Activated T-helper 2 cell treated with anti-CD3 and anti-CD28 coated beads, Interferon-gamma antibody, Interleukin-2, Interleukin-4, amounts not matched to agents 10 μg/mL and 5 μg/mL and 100 μg/mL, durations not matched to agents 14 hours and 24 hours and 36 hours (primary cell): ENCODE measurements at regions of chr11 and their contacts with region 1.

Region 1: GRCh38 chr11:112113539-112114457 is 27.1 kb downstream of the SDHD start:
- DNase-seq: no peak
- H3K4me3 Mint-ChIP-seq: no peak overlapping the region
- H3K27ac Mint-ChIP-seq: no peak overlapping the region
- H3K4me1 Mint-ChIP-seq: peaks cover 9% of the 10 kb centered on the region
- H3K27me3 Mint-ChIP-seq: no peaks in the 10 kb centered on the region

Region 2: GRCh38 chr11:111833524-111833923 is 280.3 kb before region 1 on chr11:
- intact Hi-C with region 1: no loop called
- DNase-seq: no peak
- H3K4me3 Mint-ChIP-seq: no peak overlapping the region
- H3K27ac Mint-ChIP-seq: no peak overlapping the region
- H3K4me1 Mint-ChIP-seq: peaks cover 16% of the 10 kb centered on the region
- H3K27me3 Mint-ChIP-seq: no peaks in the 10 kb centered on the region

Region 3: GRCh38 chr11:112074026-112074811 is 39.6 kb before region 1 on chr11 and contains the start of gene NKAPD1:
- intact Hi-C with region 1: no loop called
- DNase-seq: peak; percentile 75
- H3K4me3 Mint-ChIP-seq: peak within 1 kb of the TSS; percentile 94
- H3K27ac Mint-ChIP-seq: peak within 1 kb of the TSS; percentile 92
- H3K4me1 Mint-ChIP-seq: peaks cover 23% of the 10 kb centered on the region
- H3K27me3 Mint-ChIP-seq: peaks cover 8% of the 10 kb centered on the region
- total RNA-seq, gene NKAPD1: 24.6 and 25.0 TPM in 2 replicates

Region 4: DNA sequence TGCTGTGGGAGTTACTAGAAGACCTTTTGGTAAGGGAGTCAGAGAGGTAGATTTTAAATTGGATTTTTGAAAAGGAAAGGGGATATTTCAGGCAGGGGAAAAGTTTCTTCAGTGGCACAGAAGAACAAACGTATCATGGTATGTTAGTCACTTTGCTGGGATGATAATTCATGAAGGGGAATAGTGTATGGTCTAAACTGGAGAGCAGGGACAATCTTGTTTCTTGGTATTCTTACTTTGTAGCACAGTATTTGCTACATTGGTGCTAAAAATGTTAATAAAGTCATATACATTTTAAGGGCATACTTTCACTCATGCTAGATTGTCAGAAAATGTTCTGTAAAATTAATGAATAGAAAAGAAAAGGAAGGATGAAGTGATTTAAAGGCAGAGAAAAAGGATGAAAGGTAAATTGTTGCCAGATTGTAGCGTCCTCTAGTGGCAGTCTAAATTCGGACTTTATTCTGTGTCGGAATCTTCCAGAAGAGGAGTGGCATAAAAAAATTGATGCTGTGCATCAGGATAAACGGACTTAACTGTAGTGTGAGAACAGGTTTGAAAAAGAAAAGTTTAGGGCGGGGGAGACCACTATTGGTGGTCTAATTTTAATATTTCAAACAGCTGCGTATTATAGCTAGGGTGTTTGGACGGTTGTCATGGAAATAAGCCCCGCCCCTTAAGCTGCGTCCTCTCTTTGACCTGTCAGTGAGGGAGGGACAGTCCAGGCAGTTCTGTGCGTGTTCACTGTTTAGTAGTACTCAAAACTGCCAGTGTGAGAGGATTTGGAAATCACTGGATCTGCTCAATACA is 61.2 kb after region 1 on chr11 and contains the start of gene BCO2:
- intact Hi-C with region 1: loop called (anchors 2 kb)
- DNase-seq: peak; percentile 38
- H3K4me3 Mint-ChIP-seq: peak within 1 kb of the TSS; percentile 64
- H3K27ac Mint-ChIP-seq: peak within 1 kb of the TSS; percentile 30
- H3K4me1 Mint-ChIP-seq: peaks cover 8% of the 10 kb centered on the region
- H3K27me3 Mint-ChIP-seq: peaks cover 27% of the 10 kb centered on the region
- total RNA-seq, gene BCO2: 1.2 and 1.4 TPM in 2 replicates

Region 5: DNA sequence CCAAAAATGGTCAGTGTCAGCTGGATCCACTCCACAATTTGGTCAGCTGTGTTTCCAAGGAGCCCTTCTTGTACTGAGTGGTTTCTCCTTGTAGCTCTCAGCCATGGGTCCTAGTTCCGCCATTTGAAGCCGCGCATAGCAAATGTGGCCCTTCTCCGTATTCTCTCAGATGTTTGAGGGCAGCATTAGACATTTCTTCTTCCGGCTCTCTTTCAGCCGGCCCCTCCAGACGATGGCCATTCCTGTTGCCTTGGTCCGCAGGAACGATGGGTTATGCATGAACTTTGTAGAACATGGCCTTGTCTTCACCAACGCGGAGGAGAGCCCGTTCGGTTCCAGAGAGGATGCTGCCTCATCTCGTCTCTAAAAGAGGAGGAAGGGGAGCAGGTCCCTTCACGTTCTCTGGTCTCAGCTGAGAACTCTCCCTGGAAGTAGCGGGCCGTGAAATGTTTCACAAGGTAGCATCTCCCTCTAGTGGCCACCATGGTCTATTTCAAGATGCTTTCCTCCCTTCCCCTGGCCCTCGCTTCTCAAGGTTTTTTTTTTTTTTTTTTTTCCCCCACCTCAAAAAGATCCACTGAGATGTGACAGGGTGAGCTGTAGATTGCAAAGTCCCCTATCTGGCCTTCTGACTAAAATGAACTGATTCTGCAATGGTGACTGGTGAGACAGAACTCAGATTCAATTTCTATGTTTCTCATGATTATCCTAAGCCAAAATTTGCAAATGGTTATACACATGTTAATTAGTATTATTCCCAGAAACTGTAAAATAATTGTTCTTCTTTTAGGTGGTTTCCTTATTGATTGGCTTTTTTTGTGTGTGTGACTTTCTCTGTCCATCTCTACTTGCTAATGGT is 166.7 kb after region 1 on chr11:
- intact Hi-C with region 1: loop called (anchors 1 kb)
- DNase-seq: peak; percentile 60
- H3K4me3 Mint-ChIP-seq: peak overlapping the region; percentile 85
- H3K27ac Mint-ChIP-seq: peak overlapping the region; percentile 59
- H3K4me1 Mint-ChIP-seq: peaks cover 25% of the 10 kb centered on the region
- H3K27me3 Mint-ChIP-seq: no peaks in the 10 kb centered on the region